Heart right ventricle (tissue), 16 donors: ENCODE measurements at regions of chr1 and their contacts with region 1.

Region 1: GRCh38 chr1:31548907-31549808 is 27.2 kb upstream of the TINAGL1 start:
- DNase-seq: peak; percentile 73 to 84
- ATAC-seq: peak; percentile 87 to 97 (median 92)
- H3K4me3 ChIP-seq: peak overlapping the region in 7 of 10 donors; percentile 10 to 31 (median 26)
- H3K27ac ChIP-seq: peak overlapping the region in 7 of 10 donors; percentile 29 to 74 (median 51)
- H3K4me1 ChIP-seq: peaks cover 0 to 21% (median 12%) of the 10 kb centered on the region in 9 donors
- H3K27me3 ChIP-seq: peaks cover 0 to 17% (median 0%) of the 10 kb centered on the region in 7 donors
- CTCF ChIP-seq: peak; percentile 86 to 97 (median 95)

Region 2: GRCh38 chr1:31182352-31182751 is 366.8 kb before region 1 on chr1:
- intact Hi-C with region 1: loop called (anchors 2 to 10 kb)
- DNase-seq: peak; percentile 78 to 83
- ATAC-seq: peak; percentile 84 to 94 (median 92)
- H3K4me3 ChIP-seq: peak overlapping the region in 9 of 10 donors; percentile 15 to 40 (median 36)
- H3K27ac ChIP-seq: no peak overlapping the region
- H3K4me1 ChIP-seq: peaks cover 5 to 16% (median 13%) of the 10 kb centered on the region in 9 donors
- H3K27me3 ChIP-seq: peaks cover 0 to 41% (median 38%) of the 10 kb centered on the region in 7 donors
- CTCF ChIP-seq: peak in 4 of 9 donors; percentile 23 to 43 (median 41)

Region 3: DNA sequence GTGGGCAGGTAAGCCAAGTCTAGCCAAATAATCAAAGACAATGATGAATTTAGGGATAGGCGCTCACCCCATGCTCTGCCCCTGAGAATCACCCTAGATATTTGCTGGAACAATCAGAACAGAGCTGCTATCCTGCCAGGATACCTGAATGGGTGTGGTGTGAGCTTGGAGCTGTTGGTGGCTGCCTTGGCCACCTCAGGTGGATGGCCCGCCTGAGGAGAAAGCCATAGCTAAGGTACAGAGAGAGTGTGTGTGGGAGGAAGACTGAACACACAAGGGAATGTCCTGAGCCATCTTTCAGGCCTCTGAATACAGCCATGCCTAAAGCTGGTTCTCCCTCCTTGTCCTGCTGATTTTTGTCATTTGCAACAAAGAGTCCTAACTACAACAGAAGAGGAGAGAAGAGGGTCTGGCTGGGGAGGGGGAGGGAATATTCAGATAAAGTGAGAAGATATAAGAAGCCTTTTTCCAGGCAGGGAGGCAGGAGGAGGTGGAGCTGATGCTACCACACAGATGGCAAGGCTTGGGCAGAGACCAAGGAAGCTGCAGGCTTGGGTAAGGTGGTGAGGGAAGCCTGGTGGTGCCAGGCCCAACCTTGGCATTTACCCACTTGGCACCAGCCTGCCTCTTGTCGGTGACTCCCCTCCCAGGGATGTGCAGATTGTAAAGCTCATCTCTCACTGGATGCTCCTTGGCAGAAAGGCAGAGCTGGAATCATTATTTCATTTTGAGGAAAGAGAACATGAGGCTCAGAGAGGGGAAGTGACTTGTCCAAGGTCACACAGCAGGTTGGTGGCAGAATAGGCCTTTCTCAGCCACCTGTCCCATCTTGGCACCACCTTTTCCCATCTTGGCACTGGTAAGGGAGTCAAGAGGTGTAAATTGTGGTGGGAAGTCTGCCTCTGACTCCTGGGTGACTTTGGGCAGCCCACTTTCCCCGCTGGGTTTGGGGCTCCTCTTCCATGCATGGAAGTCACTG is 359.2 kb before region 1 on chr1:
- intact Hi-C with region 1: loop called in 4 of 10 experiments (anchors 2 to 10 kb)
- DNase-seq: no peak
- ATAC-seq: no peak
- H3K4me3 ChIP-seq: no peak overlapping the region
- H3K27ac ChIP-seq: no peak overlapping the region
- H3K4me1 ChIP-seq: no peaks in the 10 kb centered on the region
- H3K27me3 ChIP-seq: peaks cover 0 to 18% (median 8%) of the 10 kb centered on the region in 7 donors
- CTCF ChIP-seq: no peak

Region 4: GRCh38 chr1:31327381-31327780 is 221.8 kb before region 1 on chr1:
- intact Hi-C with region 1: loop called in 1 of 10 experiments (anchors 10 kb)
- DNase-seq: no peak
- ATAC-seq: no peak
- H3K4me3 ChIP-seq: no peak overlapping the region
- H3K27ac ChIP-seq: no peak overlapping the region
- H3K4me1 ChIP-seq: peaks cover 0 to 9% (median 0%) of the 10 kb centered on the region in 9 donors
- H3K27me3 ChIP-seq: no peaks in the 10 kb centered on the region
- CTCF ChIP-seq: no peak

Region 5: GRCh38 chr1:31394628-31395193 is 154.4 kb before region 1 on chr1:
- intact Hi-C with region 1: loop called in 5 of 10 experiments (anchors 2 to 10 kb)
- DNase-seq: peak; percentile 81 to 82
- ATAC-seq: peak; percentile 89 to 97 (median 94)
- H3K4me3 ChIP-seq: peak overlapping the region in 9 of 10 donors; percentile 8 to 53 (median 44)
- H3K27ac ChIP-seq: peak overlapping the region in 5 of 10 donors; percentile 42 to 55 (median 44)
- H3K4me1 ChIP-seq: peaks cover 0 to 22% (median 4%) of the 10 kb centered on the region in 9 donors
- H3K27me3 ChIP-seq: peaks cover 0 to 4% (median 0%) of the 10 kb centered on the region in 7 donors
- CTCF ChIP-seq: peak; percentile 74 to 96 (median 91)

Region 6: GRCh38 chr1:31422505-31423319 is 126.4 kb before region 1 on chr1:
- intact Hi-C with region 1: loop called in 8 of 10 experiments (anchors 5 to 10 kb)
- DNase-seq: peak; percentile 57 to 68
- ATAC-seq: peak; percentile 53 to 83 (median 80)
- H3K4me3 ChIP-seq: no peak overlapping the region
- H3K27ac ChIP-seq: no peak overlapping the region
- H3K4me1 ChIP-seq: peaks cover 0 to 3% (median 0%) of the 10 kb centered on the region in 9 donors
- H3K27me3 ChIP-seq: peaks cover 0 to 23% (median 13%) of the 10 kb centered on the region in 7 donors
- CTCF ChIP-seq: peak; percentile 85 to 96 (median 93)

Region 7: GRCh38 chr1:31460027-31460426 is 89.1 kb before region 1 on chr1:
- intact Hi-C with region 1: loop called in 2 of 10 experiments (anchors 2 to 5 kb)
- DNase-seq: no peak
- ATAC-seq: no peak
- H3K4me3 ChIP-seq: no peak overlapping the region
- H3K27ac ChIP-seq: no peak overlapping the region
- H3K4me1 ChIP-seq: no peaks in the 10 kb centered on the region
- H3K27me3 ChIP-seq: peaks cover 0 to 22% (median 9%) of the 10 kb centered on the region in 7 donors
- CTCF ChIP-seq: peak in 3 of 9 donors; percentile 26 to 32 (median 28)

Region 8: DNA sequence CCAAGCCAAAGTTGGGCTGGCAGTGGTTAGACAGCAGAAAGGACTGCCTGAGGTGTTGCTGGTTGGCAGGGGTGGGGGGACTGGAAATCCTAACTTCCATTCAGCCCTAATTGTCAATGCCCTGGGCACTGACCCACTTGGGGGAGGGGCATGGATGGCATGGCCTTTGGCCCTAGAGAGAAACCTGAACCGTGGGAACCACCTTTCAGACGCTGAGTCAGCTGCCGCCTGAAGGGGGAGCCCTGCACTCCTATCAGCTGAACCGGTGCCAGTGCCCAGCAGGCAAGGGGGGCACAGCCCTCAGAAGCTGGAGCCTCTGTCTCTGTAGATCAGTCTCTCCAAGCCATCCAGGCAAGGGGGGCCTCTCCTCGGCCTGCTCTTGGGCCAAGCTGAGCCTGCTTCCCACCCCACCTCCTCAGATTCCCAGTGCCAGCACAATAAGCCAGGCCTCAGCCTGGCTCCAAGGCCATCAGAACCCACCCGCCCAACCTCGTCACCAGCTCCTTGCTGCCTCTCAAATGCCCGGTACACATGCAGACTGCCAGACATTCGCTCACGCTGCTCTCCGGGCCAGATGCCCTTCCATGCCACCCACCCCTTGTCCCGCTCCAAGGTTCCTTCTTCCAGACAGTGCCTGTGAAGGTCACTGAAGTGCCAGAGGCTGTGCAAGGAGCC is 38.7 kb after region 1 on chr1:
- intact Hi-C with region 1: no loop called
- DNase-seq: peak; percentile 73 to 75
- ATAC-seq: peak; percentile 5 to 63 (median 48)
- H3K4me3 ChIP-seq: peak overlapping the region in 3 of 10 donors; percentile 45 to 46 (median 46)
- H3K27ac ChIP-seq: peak overlapping the region; percentile 82 to 96 (median 94)
- H3K4me1 ChIP-seq: peaks cover 30 to 86% (median 70%) of the 10 kb centered on the region in 9 donors
- H3K27me3 ChIP-seq: peaks cover 0 to 13% (median 0%) of the 10 kb centered on the region in 7 donors
- CTCF ChIP-seq: peak; percentile 23 to 76 (median 65)